ENCODE measurements at regions of chrX and their contacts with region 1.

Region 1: GRCh38 chrX:101390664-101391525 is at the start of gene RPL36A:
- DNase-seq: peak; percentile 59 to 89 (median 72)
- ATAC-seq: peak; percentile 93
- H3K4me3 Mint-ChIP-seq: peak within 1 kb of the TSS; percentile 88 to 95 (median 92)
- H3K27ac Mint-ChIP-seq: peak within 1 kb of the TSS; percentile 91 to 98 (median 96)
- H3K4me1 Mint-ChIP-seq: peaks cover 3 to 36% (median 27%) of the 10 kb centered on the region in 4 donors
- H3K27me3 Mint-ChIP-seq: no peaks in the 10 kb centered on the region
- polyA plus RNA-seq, gene RPL36A: 2,876 to 3,216 (median 3,107) TPM

Region 2: GRCh38 chrX:100973411-100973810 is 417.5 kb before region 1 on chrX:
- POLR2A ChIA-PET with region 1: no interaction called
- DNase-seq: no peak
- ATAC-seq: no peak
- H3K4me3 Mint-ChIP-seq: no peak overlapping the region
- H3K27ac Mint-ChIP-seq: no peak overlapping the region
- H3K4me1 Mint-ChIP-seq: peaks cover 0 to 3% (median 0%) of the 10 kb centered on the region in 4 donors
- H3K27me3 Mint-ChIP-seq: no peaks in the 10 kb centered on the region

Region 3: GRCh38 chrX:101348452-101349192 is 42.3 kb before region 1 on chrX and contains the start of gene TIMM8A:
- POLR2A ChIA-PET with region 1: interaction called, 11 read pairs
- DNase-seq: peak; percentile 62 to 85 (median 70)
- ATAC-seq: peak; percentile 98 to 99
- H3K4me3 Mint-ChIP-seq: peak within 1 kb of the TSS; percentile 86 to 93 (median 91)
- H3K27ac Mint-ChIP-seq: peak within 1 kb of the TSS; percentile 67 to 96 (median 94)
- H3K4me1 Mint-ChIP-seq: peaks cover 0 to 27% (median 13%) of the 10 kb centered on the region in 4 donors
- H3K27me3 Mint-ChIP-seq: no peaks in the 10 kb centered on the region
- polyA plus RNA-seq, gene TIMM8A: 8.6 to 12.0 (median 11.8) TPM

Region 4: DNA sequence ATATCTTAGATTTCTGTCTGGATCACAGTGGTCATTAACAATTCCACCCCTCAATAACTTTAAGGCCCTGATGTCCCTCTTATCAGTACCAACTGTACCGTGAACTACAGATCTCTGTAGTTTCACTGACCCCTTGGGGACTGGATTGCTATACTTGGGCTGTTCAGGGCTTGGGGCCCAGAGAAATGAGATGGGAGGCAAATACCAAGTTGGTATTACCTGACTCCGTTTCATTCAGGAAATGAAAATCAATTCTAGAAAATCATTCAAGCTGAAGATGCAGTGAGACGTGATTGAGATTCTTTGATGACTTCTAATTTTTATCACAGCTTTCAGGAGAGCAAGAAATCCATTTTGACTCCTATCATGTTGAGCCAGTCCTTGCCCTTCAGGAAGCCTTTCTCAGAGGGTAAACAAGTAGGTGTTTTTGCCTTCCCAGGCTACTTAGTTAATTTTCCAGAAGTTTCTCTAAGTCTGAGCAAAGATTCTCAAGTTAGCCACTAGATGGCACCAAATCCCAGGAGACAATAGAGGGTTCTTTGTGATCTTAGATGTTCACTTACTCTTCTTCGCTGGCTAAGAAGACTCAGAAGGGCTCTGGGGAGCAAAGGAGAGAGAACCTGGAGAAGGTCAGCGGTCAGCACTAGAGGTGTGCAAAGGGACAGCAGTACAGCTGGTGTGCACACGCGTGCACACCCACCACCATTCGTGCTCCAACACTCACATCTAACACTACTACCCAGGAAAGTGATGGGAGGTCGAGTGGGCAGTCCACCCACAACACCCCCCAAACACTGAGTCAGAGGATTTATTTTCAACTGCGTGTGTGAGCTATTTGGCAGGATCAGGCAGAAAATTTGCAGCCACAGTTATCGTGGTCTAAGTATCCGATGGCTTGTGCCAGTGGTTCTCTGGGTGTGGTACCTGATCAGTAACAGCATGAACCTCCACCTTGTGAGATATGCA is 24.6 kb after region 1 on chrX:
- POLR2A ChIA-PET with region 1: interaction called, 17 read pairs
- DNase-seq: peak in 8 of 10 donors; percentile 5 to 72 (median 56)
- ATAC-seq: peak; percentile 60 to 75
- H3K4me3 Mint-ChIP-seq: peak overlapping the region; percentile 12 to 79 (median 44)
- H3K27ac Mint-ChIP-seq: peak overlapping the region; percentile 78 to 94 (median 88)
- H3K4me1 Mint-ChIP-seq: peaks cover 19 to 63% (median 61%) of the 10 kb centered on the region in 4 donors
- H3K27me3 Mint-ChIP-seq: no peaks in the 10 kb centered on the region